T-cell (primary cell): ENCODE measurements at regions of chr19 and their contacts with region 1.

Region 1: DNA sequence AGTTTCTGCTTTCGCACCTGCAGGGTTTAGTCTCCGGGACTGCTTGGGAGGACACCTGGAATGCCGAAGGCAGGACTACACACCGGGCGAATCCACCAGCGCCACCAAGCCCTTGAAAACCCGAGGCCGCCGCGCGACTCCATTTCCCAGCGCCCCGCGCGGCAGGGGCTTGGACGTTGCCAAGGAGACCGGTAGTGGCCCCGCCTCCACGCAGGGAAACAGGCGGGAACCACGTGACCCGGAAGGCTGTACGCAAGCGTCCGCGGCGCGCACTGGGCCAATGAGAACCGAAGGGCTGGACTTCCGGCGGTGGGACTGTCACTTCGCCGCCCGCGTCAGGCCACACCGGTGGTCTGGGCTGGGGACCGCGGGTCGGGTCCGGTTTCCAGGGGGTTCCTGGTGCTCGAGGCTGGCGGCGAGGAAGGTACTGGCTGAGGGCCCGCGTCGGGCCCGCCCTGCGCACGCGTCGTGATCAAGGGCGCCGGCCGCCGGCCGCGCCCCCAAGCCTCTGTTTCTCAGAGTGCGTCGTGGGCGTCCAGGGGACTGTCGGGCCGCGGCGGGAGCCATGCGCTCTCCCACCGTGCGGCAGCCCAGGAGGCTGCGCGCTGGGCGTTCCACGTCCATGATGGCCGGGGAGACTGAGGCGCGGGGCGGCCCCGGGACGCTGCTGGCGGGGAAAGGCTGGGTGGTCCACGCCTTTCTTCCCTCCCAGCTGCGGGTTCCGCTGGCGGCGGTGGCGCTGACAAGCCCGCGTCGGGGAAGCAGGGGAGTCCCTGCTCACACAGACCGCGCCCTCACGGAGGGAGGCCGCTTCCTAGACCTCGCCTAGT is at the start of gene ZNF324:
- DNase-seq: peak; percentile 92 to 98 (median 97)
- ATAC-seq: peak; percentile 97 to 99 (median 98)
- H3K4me3 ChIP-seq: peak within 1 kb of the TSS; percentile 61 to 64
- H3K4me3 Mint-ChIP-seq: peak within 1 kb of the TSS; percentile 76 to 87 (median 86)
- H3K27ac ChIP-seq: peak within 1 kb of the TSS; percentile 55
- H3K27ac Mint-ChIP-seq: peak within 1 kb of the TSS; percentile 50 to 71
- H3K4me1 ChIP-seq: peaks cover 4 to 21% of the 10 kb centered on the region in 2 experiments
- H3K4me1 Mint-ChIP-seq: peaks cover 17 to 26% (median 23%) of the 10 kb centered on the region in 3 donors
- H3K27me3 ChIP-seq: peaks cover 0 to 5% of the 10 kb centered on the region in 2 experiments
- H3K27me3 Mint-ChIP-seq: no peaks in the 10 kb centered on the region
- total RNA-seq, gene ZNF324: 17.9 to 33.2 (median 28.2) TPM

Region 2: DNA sequence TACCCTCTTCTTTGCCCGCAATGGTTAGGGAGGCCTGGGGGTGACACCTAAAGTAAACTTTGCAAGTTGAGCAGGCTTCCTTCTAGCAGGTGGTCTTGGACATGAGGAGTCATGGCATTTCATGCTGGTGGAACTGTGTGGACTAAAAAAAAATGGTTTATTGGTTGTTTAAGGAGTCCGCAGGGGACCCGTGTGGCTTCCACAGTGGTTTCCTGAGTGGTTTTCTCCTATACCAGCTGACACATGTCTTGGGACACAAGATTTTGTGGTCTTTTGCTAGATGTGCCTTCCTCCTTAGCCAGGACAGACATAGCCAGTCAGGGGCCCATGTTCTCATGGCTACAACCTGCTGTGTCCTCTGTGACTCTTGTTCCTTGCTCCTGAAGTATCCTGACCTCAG is 1145.2 kb before region 1 on chr19:
- CTCF ChIA-PET with region 1: no interaction called
- POLR2A ChIA-PET with region 1: interaction called in 1 of 2 experiments, 12 read pairs
- DNase-seq: no peak
- ATAC-seq: no peak
- H3K4me3 ChIP-seq: peak overlapping the region in 1 of 2 donors; percentile 44
- H3K4me3 Mint-ChIP-seq: peak overlapping the region; percentile 92 to 95 (median 93)
- H3K27ac ChIP-seq: no peak overlapping the region
- H3K27ac Mint-ChIP-seq: peak overlapping the region in 1 of 2 donors; percentile 6
- H3K4me1 ChIP-seq: peaks cover 21 to 24% of the 10 kb centered on the region in 2 experiments
- H3K4me1 Mint-ChIP-seq: peaks cover 27 to 33% (median 32%) of the 10 kb centered on the region in 3 donors
- H3K27me3 ChIP-seq: peaks cover 0 to 16% of the 10 kb centered on the region in 2 experiments
- H3K27me3 Mint-ChIP-seq: peaks cover 10 to 13% of the 10 kb centered on the region in 2 donors

Region 3: DNA sequence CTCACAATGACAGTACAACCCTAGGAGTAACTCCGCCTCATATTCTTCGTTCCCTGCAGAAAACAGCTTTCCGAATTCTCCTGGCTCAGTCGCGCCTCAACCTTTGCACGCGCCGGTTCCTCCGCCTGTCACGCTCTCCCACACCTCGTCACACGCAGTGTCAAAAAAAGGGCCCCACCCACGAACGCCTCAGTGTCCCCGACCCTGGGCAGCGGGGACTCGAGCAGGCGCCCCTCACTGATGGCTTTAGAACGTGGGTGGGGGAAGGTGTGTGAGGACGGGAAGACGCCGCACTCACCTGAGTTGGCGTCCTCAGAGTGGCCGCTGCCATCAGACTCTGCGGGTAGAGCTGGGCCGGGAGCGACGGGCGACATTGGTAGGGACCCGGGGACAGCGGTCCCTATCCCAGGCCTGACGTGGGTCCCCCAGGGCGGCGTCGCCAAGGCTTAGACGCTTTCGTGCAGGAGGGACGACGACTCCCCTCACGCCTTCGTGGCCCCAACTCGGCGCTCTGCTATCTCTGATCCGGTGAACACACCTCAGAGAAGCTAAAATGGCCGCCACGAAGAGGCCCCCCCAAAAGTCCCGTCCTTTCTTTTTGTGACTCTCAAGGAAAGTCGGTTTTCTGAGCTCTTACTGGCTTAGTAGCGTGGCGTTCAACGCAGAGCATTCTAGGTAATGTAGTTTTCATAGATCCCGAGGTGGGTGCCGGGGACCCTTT is 758.2 kb before region 1 on chr19 and contains the start of gene ZNF154:
- CTCF ChIA-PET with region 1: no interaction called
- POLR2A ChIA-PET with region 1: interaction called in 1 of 2 experiments, 13 read pairs
- DNase-seq: peak in 34 of 35 experiments; percentile 11 to 78 (median 48)
- ATAC-seq: peak; percentile 86 to 95 (median 88)
- H3K4me3 ChIP-seq: peak within 1 kb of the TSS; percentile 55 to 71
- H3K4me3 Mint-ChIP-seq: peak within 1 kb of the TSS; percentile 76 to 94 (median 88)
- H3K27ac ChIP-seq: peak within 1 kb of the TSS; percentile 80
- H3K27ac Mint-ChIP-seq: peak within 1 kb of the TSS; percentile 42 to 82
- H3K4me1 ChIP-seq: peaks cover 11 to 12% of the 10 kb centered on the region in 2 experiments
- H3K4me1 Mint-ChIP-seq: peaks cover 12 to 33% (median 31%) of the 10 kb centered on the region in 3 donors
- H3K27me3 ChIP-seq: peaks cover 0 to 13% of the 10 kb centered on the region in 2 experiments
- H3K27me3 Mint-ChIP-seq: peaks cover 0 to 11% of the 10 kb centered on the region in 2 donors
- total RNA-seq, gene ZNF154: 6.3 to 16.2 (median 7.7) TPM